Natural killer cell (primary cell): ENCODE measurements at regions of chr7 and their contacts with region 1.

Region 1: GRCh38 chr7:107103363-107103762 is 58.9 kb downstream of the PRKAR2B start:
- DNase-seq: peak; percentile 35 to 46
- ATAC-seq: peak; percentile 90 to 97 (median 92)
- H3K4me3 ChIP-seq: no peak overlapping the region
- H3K4me3 Mint-ChIP-seq: peak overlapping the region; percentile 55
- H3K27ac ChIP-seq: peak overlapping the region; percentile 60
- H3K27ac Mint-ChIP-seq: peak overlapping the region; percentile 76 to 84
- H3K4me1 ChIP-seq: peaks cover 16% of the 10 kb centered on the region
- H3K4me1 Mint-ChIP-seq: peaks cover 6 to 11% of the 10 kb centered on the region in 2 donors
- H3K27me3 ChIP-seq: no peaks in the 10 kb centered on the region
- H3K27me3 Mint-ChIP-seq: peaks cover 0 to 3% of the 10 kb centered on the region in 2 donors
- CTCF ChIP-seq: no peak

Region 2: GRCh38 chr7:106964466-106964865 is 138.9 kb before region 1 on chr7:
- intact Hi-C with region 1: no loop called
- DNase-seq: no peak
- ATAC-seq: no peak
- H3K4me3 ChIP-seq: no peak overlapping the region
- H3K4me3 Mint-ChIP-seq: no peak overlapping the region
- H3K27ac ChIP-seq: no peak overlapping the region
- H3K27ac Mint-ChIP-seq: no peak overlapping the region
- H3K4me1 ChIP-seq: no peaks in the 10 kb centered on the region
- H3K4me1 Mint-ChIP-seq: no peaks in the 10 kb centered on the region
- H3K27me3 ChIP-seq: no peaks in the 10 kb centered on the region
- H3K27me3 Mint-ChIP-seq: peaks cover 4 to 16% of the 10 kb centered on the region in 2 donors
- CTCF ChIP-seq: no peak

Region 3: DNA sequence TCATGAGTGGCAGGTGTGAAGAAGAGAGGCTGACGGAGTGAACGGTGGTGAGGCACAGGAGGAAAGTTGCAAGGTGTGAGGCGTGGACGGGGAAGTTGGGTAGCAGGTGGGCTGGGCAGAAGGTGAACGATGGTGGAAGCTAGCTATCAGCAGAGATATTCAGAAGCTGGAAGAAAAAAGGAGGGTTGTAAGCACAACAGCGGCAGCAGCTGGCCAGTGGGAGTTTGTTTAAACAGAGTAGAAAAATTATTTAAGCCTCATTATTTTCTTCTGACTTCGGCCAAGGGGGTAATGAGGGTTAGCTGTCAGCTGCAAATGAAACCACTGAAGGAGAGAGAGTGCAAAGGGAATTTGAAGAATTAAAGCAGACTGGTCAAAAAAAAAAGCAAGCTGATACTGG is 120.9 kb before region 1 on chr7:
- intact Hi-C with region 1: no loop called
- DNase-seq: no peak
- ATAC-seq: no peak
- H3K4me3 ChIP-seq: no peak overlapping the region
- H3K4me3 Mint-ChIP-seq: no peak overlapping the region
- H3K27ac ChIP-seq: no peak overlapping the region
- H3K27ac Mint-ChIP-seq: no peak overlapping the region
- H3K4me1 ChIP-seq: no peaks in the 10 kb centered on the region
- H3K4me1 Mint-ChIP-seq: no peaks in the 10 kb centered on the region
- H3K27me3 ChIP-seq: no peaks in the 10 kb centered on the region
- H3K27me3 Mint-ChIP-seq: peaks cover 0 to 5% of the 10 kb centered on the region in 2 donors
- CTCF ChIP-seq: no peak

Region 4: GRCh38 chr7:107130487-107131225 is 27.3 kb after region 1 on chr7:
- intact Hi-C with region 1: loop called (anchors 1 kb)
- DNase-seq: no peak
- ATAC-seq: no peak
- H3K4me3 ChIP-seq: no peak overlapping the region
- H3K4me3 Mint-ChIP-seq: no peak overlapping the region
- H3K27ac ChIP-seq: no peak overlapping the region
- H3K27ac Mint-ChIP-seq: no peak overlapping the region
- H3K4me1 ChIP-seq: peaks cover 13% of the 10 kb centered on the region
- H3K4me1 Mint-ChIP-seq: peaks cover 14% of the 10 kb centered on the region in 2 donors
- H3K27me3 ChIP-seq: no peaks in the 10 kb centered on the region
- H3K27me3 Mint-ChIP-seq: peaks cover 0 to 3% of the 10 kb centered on the region in 2 donors
- CTCF ChIP-seq: no peak

Region 5: DNA sequence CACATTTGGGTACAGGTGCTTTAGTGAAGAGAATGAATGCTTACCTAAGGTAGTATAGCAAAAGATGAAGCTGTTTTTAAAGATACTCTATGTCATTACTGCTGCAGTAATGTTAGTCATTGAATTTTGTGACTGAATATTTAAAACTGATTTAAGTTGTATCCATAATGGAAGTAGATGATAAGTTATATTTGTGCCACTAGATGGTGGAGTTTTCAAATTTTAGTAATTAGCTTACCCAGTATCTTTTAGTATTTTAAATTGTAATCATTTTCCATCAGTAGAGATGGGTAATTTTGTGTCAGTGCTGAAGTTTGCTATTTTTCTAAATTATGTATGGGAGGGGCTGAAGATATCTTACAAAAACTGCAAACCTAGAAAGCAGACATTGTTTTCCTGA is 90.7 kb after region 1 on chr7:
- intact Hi-C with region 1: no loop called
- DNase-seq: no peak
- ATAC-seq: no peak
- H3K4me3 ChIP-seq: no peak overlapping the region
- H3K4me3 Mint-ChIP-seq: no peak overlapping the region
- H3K27ac ChIP-seq: no peak overlapping the region
- H3K27ac Mint-ChIP-seq: peak overlapping the region; percentile 4 to 44
- H3K4me1 ChIP-seq: no peaks in the 10 kb centered on the region
- H3K4me1 Mint-ChIP-seq: peaks cover 5 to 11% of the 10 kb centered on the region in 2 donors
- H3K27me3 ChIP-seq: no peaks in the 10 kb centered on the region
- H3K27me3 Mint-ChIP-seq: no peaks in the 10 kb centered on the region
- CTCF ChIP-seq: no peak